Posterior cingulate gyrus (tissue), 11 donors: ENCODE measurements at regions of chr20 and their contacts with region 1.

Region 1: DNA sequence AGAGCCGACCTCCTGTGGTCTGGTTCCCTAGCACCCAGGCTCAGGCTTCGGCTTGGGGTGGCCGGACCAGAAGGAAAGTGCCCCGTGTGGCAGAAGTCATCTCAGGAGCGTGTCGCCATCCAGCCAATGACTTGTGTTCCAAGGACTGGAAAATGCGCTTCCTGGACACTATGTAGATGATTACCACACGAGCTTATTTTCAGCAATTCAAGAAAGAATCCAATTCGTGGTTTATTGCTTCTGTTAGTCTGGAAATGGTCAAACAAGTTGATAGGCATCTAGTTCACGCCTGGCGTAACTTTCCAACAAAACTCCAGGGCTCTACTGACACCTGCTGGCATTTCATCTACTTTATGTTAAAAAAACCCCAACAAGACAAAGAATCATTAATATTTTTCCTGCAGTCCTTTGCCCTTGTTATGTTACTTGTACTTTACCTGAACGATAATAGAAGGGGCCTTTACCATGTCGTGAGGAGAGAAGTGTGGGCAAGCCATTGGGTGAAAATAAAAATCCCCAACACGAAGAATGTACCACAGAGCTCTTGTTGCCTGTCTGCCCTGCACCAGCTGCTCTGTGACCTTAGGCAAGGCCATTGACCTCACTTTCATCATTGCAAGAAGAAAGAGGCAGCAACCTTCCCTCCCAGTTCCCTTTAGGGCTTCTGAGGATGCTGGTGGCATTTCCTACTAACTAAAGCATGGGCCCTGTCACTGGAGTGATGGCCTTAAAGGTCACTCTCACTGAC is 154.7 kb upstream of the LAMP5 start:
- DNase-seq: peak in 6 of 10 donors; percentile 7 to 81 (median 22)

Region 2: DNA sequence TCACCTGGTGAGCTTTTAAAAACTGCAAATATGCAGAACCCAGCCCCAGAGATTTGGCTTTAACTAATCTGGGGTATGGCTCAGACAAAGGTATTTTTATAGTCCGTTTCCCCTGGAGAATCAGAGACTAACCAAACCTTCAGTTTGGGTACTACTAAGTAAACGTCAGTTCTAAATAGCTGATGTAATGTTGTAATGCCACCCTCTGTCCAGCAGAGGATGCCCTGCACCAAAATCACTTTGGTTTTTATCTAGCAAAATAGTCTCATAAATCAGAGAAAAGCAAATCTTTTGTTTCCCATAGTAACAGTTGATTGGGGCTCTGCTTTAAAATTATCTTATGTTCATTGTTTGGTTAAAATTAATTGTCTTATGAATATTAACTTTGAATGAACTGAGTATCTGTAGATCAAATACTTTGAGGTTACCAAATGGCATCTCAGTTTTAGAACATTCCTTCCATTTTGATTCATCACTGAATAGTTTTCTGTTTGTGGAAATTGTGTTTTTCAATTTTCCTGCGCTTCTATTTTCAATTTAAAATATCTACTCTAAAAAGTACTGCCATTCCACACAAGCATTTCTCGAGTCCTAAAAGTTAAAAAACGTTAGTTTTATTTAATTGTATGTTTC is 569.2 kb before region 1 on chr20:
- intact Hi-C with region 1: loop called (anchors 5 kb)
- DNase-seq: peak in 1 of 10 donors; percentile 28

Region 3: DNA sequence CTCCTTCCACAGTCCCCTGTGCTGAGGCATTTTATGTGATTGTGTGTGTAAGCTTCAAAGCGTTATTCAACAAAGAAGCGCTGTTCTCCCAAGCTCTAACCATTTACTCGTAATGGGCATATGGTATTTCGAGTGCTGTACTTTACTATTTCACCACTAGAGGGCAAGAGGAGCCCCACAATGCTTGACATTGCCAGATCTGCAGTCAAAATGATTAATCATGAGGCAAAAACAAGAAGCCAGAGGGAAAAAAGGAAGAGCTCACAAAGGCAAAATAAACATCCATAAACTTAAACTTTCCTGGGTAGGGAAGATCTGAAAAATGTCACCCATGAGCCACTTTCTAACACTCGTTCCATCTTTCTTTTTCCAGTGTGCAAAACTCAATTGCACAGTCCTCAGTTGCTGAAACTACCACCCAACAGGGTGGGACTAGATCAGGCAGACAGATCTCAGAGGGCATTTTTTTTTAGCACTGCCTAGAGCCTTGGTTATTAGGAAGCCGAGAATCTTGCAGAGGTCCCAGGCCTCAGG is 505.9 kb before region 1 on chr20:
- intact Hi-C with region 1: loop called (anchors 5 kb)
- DNase-seq: peak in 2 of 10 donors; percentile 12 to 14